CD4-positive, alpha-beta memory T cell (primary cell): ENCODE measurements at regions of chr14 and their contacts with region 1.

Region 1: GRCh38 chr14:88492272-88493089 is 62.3 kb downstream of the PTPN21 start:
- DNase-seq: peak; percentile 53 to 65 (median 56)
- H3K4me3 ChIP-seq: no peak overlapping the region
- H3K4me3 Mint-ChIP-seq: no peak overlapping the region
- H3K27ac ChIP-seq: no peak overlapping the region
- H3K27ac Mint-ChIP-seq: peak overlapping the region in 1 of 7 donors; percentile 15
- H3K4me1 ChIP-seq: no peaks in the 10 kb centered on the region
- H3K4me1 Mint-ChIP-seq: no peaks in the 10 kb centered on the region
- H3K27me3 ChIP-seq: no peaks in the 10 kb centered on the region
- H3K27me3 Mint-ChIP-seq: peaks cover 1 to 3% of the 10 kb centered on the region in 2 donors

Region 2: GRCh38 chr14:87667659-87668058 is 824.8 kb before region 1 on chr14:
- CTCF ChIA-PET with region 1: no interaction called
- POLR2A ChIA-PET with region 1: no interaction called
- intact Hi-C with region 1: no loop called
- DNase-seq: no peak
- H3K4me3 ChIP-seq: no peak overlapping the region
- H3K4me3 Mint-ChIP-seq: no peak overlapping the region
- H3K27ac ChIP-seq: no peak overlapping the region
- H3K27ac Mint-ChIP-seq: no peak overlapping the region
- H3K4me1 ChIP-seq: no peaks in the 10 kb centered on the region
- H3K4me1 Mint-ChIP-seq: no peaks in the 10 kb centered on the region
- H3K27me3 ChIP-seq: no peaks in the 10 kb centered on the region
- H3K27me3 Mint-ChIP-seq: no peaks in the 10 kb centered on the region

Region 3: DNA sequence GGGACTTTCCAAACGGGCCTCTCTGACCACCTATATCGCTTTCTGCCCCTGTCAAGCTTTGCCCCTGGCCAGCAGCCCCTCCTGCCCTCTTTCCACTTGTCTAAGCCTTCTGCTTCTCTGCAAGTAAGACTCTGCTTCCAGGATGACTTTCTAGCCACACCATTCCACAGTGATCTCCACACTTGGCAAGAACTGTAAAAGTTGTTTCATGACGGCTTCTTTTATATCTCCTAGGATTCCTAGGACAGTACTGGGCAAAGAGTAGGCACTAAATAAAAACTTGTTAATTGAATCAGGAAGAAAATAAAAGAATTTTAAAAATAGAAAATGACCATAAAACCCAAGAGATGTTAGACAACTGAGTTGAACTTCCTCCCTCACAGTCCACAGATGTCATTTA is 64.1 kb after region 1 on chr14:
- CTCF ChIA-PET with region 1: interaction called, 5 read pairs
- POLR2A ChIA-PET with region 1: no interaction called
- intact Hi-C with region 1: loop called (anchors 2 kb)
- DNase-seq: no peak
- H3K4me3 ChIP-seq: no peak overlapping the region
- H3K4me3 Mint-ChIP-seq: peak overlapping the region in 1 of 8 donors; percentile 83
- H3K27ac ChIP-seq: no peak overlapping the region
- H3K27ac Mint-ChIP-seq: peak overlapping the region in 2 of 7 donors; percentile 48 to 87
- H3K4me1 ChIP-seq: peaks cover 25% of the 10 kb centered on the region
- H3K4me1 Mint-ChIP-seq: peaks cover 24 to 40% (median 35%) of the 10 kb centered on the region in 4 donors
- H3K27me3 ChIP-seq: peaks cover 42% of the 10 kb centered on the region
- H3K27me3 Mint-ChIP-seq: peaks cover 28 to 41% of the 10 kb centered on the region in 2 donors